Ascending aorta (tissue), 2 donors: ENCODE measurements at regions of chr2 and their contacts with region 1.

Region 1: DNA sequence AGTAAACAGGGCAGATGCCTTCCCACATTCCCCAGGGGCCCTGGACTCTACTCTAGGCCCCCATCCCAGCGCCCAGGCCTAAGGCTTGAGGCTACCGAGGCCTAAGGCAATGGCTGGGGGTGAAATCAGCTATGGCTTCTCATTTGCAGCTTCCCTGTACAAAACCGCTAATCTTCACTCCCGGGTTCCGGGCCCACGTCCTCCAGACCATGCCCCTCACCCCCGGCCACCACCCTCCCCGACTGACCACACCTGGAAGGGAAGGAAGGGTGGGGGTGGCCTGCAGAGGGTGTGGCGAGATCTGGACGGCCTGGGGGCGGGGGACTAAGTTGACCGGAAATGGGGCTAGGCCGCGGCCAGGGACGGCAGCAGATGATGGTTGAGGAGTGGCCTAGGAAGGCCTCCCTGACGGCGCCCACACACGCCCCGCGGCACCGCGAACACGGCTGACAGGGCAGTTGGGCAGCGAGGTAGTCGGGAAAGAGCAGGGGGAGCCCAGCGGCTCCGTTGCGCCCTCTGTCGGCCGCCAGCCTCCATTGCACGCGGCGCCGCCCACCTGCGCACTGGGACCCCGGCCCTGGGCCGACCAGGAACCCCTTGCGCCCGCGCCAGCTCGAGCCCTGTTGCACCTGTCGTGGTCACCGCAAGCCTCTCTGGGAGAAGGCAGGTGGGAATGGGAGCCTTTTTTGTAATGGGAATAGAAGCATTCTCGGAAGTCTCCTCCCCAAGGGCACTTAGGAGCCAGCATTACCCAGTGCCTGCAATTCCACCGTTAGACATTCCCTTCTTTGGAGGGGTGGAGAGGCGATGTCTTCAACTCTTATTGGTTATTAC is 117.1 kb upstream of the STPG4 start:
- DNase-seq: peak; percentile 22 to 79
- H3K4me3 ChIP-seq: peak overlapping the region; percentile 40 to 55
- H3K27ac ChIP-seq: peak overlapping the region; percentile 54 to 71
- H3K4me1 ChIP-seq: peaks cover 11 to 23% of the 10 kb centered on the region in 2 donors
- H3K27me3 ChIP-seq: no peaks in the 10 kb centered on the region
- CTCF ChIP-seq: peak; percentile 97

Region 2: GRCh38 chr2:47076586-47077441 is 195.4 kb before region 1 on chr2:
- intact Hi-C with region 1: loop called (anchors 2 kb)
- DNase-seq: peak; percentile 47 to 95
- H3K4me3 ChIP-seq: no peak overlapping the region
- H3K27ac ChIP-seq: peak overlapping the region; percentile 94 to 98
- H3K4me1 ChIP-seq: peaks cover 5 to 56% of the 10 kb centered on the region in 2 donors
- H3K27me3 ChIP-seq: no peaks in the 10 kb centered on the region
- CTCF ChIP-seq: no peak

Region 3: DNA sequence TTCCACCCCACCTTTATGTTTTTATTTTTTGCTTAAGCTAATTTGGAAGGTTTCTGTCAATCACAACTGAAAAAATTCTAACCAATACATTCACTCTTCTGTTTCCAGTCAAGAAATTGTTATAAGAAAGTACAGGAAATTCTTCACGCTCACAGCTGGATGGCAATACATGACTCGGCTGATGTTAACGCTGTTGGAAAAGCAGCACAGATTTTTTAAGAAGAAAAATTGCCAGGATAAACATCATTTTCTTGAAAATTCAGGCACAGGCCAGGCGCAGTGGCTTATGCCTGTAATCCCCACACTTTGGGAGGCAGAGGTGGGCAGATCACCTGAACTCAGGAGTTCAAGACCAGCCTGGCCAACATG is 163.3 kb before region 1 on chr2:
- intact Hi-C with region 1: no loop called
- DNase-seq: no peak
- H3K4me3 ChIP-seq: no peak overlapping the region
- H3K27ac ChIP-seq: no peak overlapping the region
- H3K4me1 ChIP-seq: no peaks in the 10 kb centered on the region
- H3K27me3 ChIP-seq: no peaks in the 10 kb centered on the region
- CTCF ChIP-seq: no peak

Region 4: DNA sequence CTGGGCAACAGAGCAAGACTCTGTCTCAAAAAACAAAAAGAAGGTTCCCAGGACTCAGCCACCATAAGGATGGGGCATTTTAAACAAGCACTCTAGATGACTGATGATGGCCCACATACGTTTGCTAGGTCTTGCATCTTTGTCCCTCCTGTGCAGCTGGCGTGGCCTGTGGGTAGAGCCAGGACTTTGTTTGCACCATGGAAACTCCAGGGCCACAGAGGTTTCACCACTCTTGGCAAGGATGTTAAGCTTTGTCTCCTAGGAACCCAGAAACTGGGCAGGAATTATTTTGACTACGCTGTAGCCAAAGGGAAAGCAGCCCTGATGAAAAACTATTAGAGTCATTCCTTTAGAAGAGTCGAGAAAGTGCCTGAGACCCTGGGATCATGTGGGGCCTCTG is 41.8 kb before region 1 on chr2:
- intact Hi-C with region 1: loop called (anchors 2 kb)
- DNase-seq: peak; percentile 38 to 88
- H3K4me3 ChIP-seq: no peak overlapping the region
- H3K27ac ChIP-seq: peak overlapping the region; percentile 74 to 75
- H3K4me1 ChIP-seq: peaks cover 0 to 11% of the 10 kb centered on the region in 2 donors
- H3K27me3 ChIP-seq: no peaks in the 10 kb centered on the region
- CTCF ChIP-seq: no peak

Region 5: DNA sequence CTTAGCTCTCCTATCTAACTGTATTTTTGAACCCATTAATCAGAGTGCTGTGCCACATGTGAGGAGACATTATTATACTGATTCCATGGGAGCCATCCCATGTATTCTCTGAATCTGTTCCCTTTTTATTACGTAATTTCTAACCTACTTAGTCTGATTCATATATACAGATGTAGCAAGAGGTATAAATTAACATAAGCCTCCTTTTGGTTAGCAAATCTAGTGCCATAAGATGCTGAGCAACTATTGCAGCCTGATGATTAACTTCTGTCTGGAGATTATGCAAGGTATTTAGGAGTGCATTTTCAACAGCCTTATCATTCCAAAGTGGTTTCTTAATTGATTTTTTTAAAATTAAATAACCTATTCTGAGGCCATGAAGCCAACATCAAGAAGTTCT is 16.6 kb after region 1 on chr2:
- intact Hi-C with region 1: no loop called
- DNase-seq: no peak
- H3K4me3 ChIP-seq: no peak overlapping the region
- H3K27ac ChIP-seq: no peak overlapping the region
- H3K4me1 ChIP-seq: no peaks in the 10 kb centered on the region
- H3K27me3 ChIP-seq: no peaks in the 10 kb centered on the region
- CTCF ChIP-seq: no peak